HepG2 (cell line): ENCODE measurements at regions of chr10 and their contacts with region 1.

Region 1: GRCh38 chr10:7707102-7707501 is 4.0 kb downstream of the ITIH2 start:
- DNase-seq: peak; percentile 97
- ATAC-seq: peak; percentile 68
- H3K4me3 ChIP-seq: peak overlapping the region in 2 of 3 experiments; percentile 18 to 55; a peak in 2 of 6 replicates
- H3K27ac ChIP-seq: peak overlapping the region; percentile 98
- H3K4me1 ChIP-seq: peaks cover 78% of the 10 kb centered on the region
- H3K27me3 ChIP-seq: no peaks in the 10 kb centered on the region
- CTCF ChIP-seq: no peak
- EP300 ChIP-seq: peak; percentile 74 to 99; a peak in 3 of 4 replicates
- POLR2A ChIP-seq: peak; percentile 52 to 69
- RAD21 ChIP-seq: no peak

Region 2: DNA sequence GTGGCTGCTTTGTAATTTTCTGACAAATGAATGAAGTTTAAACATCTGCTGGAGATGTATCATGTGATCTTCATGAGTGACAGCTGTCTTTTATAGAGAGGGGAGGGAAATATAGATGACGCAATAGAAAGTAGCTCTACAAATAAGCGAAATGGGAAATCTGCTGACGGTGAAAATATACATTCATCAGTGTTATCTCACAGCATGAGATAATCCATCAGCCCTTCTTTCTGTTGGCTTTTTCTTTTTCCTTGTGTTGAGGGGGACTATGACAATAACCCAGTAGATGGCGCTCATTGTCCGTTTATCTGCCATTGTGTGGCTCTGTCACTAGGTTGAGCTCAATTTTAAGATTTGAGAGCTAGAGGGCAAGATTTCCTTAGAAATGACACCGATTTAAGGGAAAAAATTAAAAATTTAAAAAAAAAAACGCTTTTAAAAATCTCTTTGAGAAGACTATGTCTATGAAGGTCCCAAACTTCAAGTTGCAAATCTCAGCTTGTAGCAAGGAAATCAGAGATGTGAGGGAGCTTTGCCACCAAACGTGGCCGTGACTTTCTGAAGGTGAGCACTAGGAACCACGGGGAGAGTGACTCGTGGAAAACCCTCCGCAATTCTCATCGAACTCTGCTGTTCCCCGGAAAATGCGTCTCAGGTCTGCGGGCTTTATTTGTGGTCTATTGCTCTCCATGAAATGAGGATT is 181.6 kb before region 1 on chr10:
- CTCF ChIA-PET with region 1: no interaction called
- POLR2A ChIA-PET with region 1: interaction called, 17 read pairs
- in situ Hi-C with region 1: no loop called
- intact Hi-C with region 1: no loop called
- DNase-seq: peak; percentile 71
- ATAC-seq: peak; percentile 88
- H3K4me3 ChIP-seq: peak overlapping the region; percentile 47 to 53 (median 47)
- H3K27ac ChIP-seq: no peak overlapping the region
- H3K4me1 ChIP-seq: peaks cover 9% of the 10 kb centered on the region; the same call in 1 of the 2 replicates
- H3K27me3 ChIP-seq: peaks cover 2 to 16% of the 10 kb centered on the region in 2 experiments; a peak in 3 of 5 replicates
- CTCF ChIP-seq: peak; percentile 87
- EP300 ChIP-seq: no peak
- POLR2A ChIP-seq: no peak
- RAD21 ChIP-seq: peak; percentile 79

Region 3: DNA sequence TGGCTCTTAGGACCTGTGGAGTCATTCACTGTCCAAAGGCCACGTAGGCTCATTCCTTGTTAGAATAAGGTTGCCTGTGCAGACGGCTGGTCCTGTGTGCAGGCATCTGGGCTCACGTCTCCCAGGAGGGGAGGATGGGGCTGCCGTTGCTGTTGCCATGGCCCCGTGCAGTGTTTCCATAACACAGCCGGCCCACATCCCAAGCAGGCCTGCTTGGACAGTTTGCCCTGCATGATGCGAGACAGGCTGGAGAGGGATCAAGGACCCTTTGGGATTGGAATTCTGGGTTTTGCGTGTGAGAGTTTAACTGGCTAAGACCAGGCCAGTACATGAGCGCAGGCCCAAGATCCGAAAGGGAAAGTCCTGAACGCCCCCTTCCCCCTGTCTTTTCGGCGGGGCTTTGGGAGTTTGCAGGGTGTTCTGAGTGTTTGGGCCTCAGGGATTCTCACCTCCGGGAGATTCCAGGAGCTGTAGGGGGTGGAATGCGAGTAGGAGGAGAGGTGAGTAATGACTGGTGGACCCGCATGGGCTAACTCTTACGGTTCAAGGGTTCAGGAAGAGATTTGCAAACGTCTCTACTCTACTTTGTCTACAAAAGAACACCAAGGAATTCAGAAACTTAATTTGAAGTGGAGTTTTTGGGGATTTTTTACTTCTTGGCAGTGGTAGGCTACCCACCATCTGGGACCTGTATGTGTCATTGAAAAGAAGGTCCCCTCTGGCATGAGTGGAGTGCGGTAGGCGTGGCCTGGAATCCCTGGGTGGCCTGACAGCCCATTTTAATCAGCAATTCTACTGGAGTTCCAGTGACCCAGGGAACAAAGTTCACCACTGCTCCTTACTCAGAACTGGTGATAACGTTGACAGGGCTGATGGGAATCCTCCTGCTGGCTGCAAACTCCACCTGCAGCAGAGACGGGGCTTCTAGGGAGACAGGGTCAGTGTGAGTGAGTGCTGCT is 165.7 kb before region 1 on chr10:
- CTCF ChIA-PET with region 1: no interaction called
- POLR2A ChIA-PET with region 1: interaction called, 16 read pairs
- in situ Hi-C with region 1: no loop called
- intact Hi-C with region 1: no loop called
- DNase-seq: peak; percentile 93
- ATAC-seq: peak; percentile 92
- H3K4me3 ChIP-seq: peak overlapping the region; percentile 36 to 66 (median 47)
- H3K27ac ChIP-seq: peak overlapping the region; percentile 86
- H3K4me1 ChIP-seq: peaks cover 56% of the 10 kb centered on the region
- H3K27me3 ChIP-seq: no peaks in the 10 kb centered on the region
- CTCF ChIP-seq: peak; percentile 53
- EP300 ChIP-seq: peak; percentile 61 to 89
- POLR2A ChIP-seq: peak in 1 of 2 experiments; percentile 68; a peak in 2 of 4 replicates
- RAD21 ChIP-seq: peak; percentile 58; the same call in 1 of the 2 replicates

Region 4: DNA sequence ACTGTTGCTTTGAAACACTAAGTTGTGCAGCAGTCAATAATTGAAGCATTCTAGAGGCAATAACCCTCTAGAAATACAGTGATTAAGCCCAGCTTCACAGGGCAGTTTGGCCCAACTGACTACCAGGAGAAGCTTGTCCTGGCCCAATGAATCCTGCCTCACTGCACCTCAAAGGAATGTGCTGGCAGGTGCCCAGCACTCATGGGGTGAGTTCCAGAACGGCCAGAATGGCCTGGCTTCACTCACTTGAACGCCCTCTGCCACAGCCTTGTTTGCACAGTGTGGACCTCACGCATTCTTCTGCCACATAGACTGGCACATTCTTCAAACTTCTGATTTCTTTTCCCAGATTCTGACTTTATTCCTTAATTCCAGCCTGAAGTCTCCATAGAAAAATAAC is 10.6 kb before region 1 on chr10:
- CTCF ChIA-PET with region 1: no interaction called
- POLR2A ChIA-PET with region 1: interaction called, 56 read pairs
- in situ Hi-C with region 1: no loop called
- intact Hi-C with region 1: loop called (anchors 1 kb)
- DNase-seq: peak; percentile 82
- ATAC-seq: peak; percentile 69
- H3K4me3 ChIP-seq: no peak overlapping the region
- H3K27ac ChIP-seq: peak overlapping the region; percentile 46
- H3K4me1 ChIP-seq: peaks cover 59% of the 10 kb centered on the region
- H3K27me3 ChIP-seq: no peaks in the 10 kb centered on the region
- CTCF ChIP-seq: no peak
- EP300 ChIP-seq: peak in 1 of 2 experiments; percentile 37; a peak in 1 of 4 replicates
- POLR2A ChIP-seq: no peak
- RAD21 ChIP-seq: 0 out of 2 replicates have a peak, but pooled peaks have one; percentile 13

Region 5: DNA sequence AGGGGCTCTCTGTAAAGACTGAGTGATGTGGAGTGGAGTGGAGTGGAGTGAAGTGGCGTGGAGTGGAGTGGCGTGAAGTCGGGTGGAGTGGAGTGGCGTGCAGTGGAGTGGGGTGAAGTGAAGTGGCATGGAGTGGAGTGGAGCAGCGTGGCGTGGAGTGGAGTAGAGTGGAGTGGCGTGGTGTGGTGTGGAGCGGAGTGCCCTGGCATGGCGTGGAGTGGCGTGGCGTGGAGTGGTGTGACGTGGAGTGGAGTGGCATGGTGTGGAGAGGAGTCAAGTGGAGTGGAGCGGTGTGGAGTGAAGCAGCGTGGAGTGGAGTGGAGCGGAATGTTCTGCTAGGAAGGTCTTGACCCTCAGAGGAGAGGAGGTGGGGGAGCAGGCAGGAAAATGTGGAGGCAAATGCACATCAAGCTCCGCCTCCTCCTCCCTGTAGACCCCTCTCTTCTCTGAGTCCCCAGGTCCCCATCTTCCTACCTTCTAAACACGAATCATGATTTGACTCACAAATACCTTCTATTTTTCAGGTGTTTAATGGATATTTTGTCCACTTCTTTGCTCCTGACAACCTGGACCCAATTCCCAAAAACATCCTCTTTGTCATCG is 15.9 kb after region 1 on chr10:
- CTCF ChIA-PET with region 1: no interaction called
- POLR2A ChIA-PET with region 1: interaction called, 69 read pairs
- in situ Hi-C with region 1: no loop called
- intact Hi-C with region 1: no loop called
- DNase-seq: no peak
- ATAC-seq: peak; percentile 41
- H3K4me3 ChIP-seq: no peak overlapping the region
- H3K27ac ChIP-seq: no peak overlapping the region
- H3K4me1 ChIP-seq: 0 out of 2 replicates have a peak, but pooled peaks cover 8% of the 10 kb centered on the region
- H3K27me3 ChIP-seq: no peaks in the 10 kb centered on the region
- CTCF ChIP-seq: no peak
- EP300 ChIP-seq: no peak
- POLR2A ChIP-seq: peak; percentile 36 to 62; a peak in 3 of 4 replicates
- RAD21 ChIP-seq: no peak

Region 6: DNA sequence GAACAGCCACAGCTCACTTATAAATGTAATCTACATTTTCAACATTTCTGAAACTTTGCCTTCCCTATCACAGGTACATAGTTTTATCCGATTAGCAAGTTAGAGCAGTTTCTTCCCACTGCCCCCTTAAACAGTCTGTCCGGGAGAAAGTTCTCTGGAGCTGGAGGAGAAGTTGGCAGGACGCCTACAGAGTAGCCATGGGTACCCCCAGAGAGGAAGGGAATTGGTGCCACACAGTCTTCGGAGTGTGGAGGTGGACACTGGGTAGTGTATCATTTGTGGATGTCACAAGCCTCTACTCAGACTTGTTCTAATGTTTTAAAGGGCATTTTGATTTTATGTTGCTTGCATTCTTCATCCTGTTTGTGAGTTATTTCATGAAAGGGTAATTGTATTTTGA is 150.2 kb after region 1 on chr10:
- CTCF ChIA-PET with region 1: no interaction called
- POLR2A ChIA-PET with region 1: no interaction called
- in situ Hi-C with region 1: no loop called
- intact Hi-C with region 1: no loop called
- DNase-seq: no peak
- ATAC-seq: no peak
- H3K4me3 ChIP-seq: no peak overlapping the region
- H3K27ac ChIP-seq: no peak overlapping the region
- H3K4me1 ChIP-seq: peaks cover 19% of the 10 kb centered on the region
- H3K27me3 ChIP-seq: no peaks in the 10 kb centered on the region
- CTCF ChIP-seq: no peak
- EP300 ChIP-seq: no peak
- POLR2A ChIP-seq: no peak
- RAD21 ChIP-seq: no peak